AG04450 (cell line): ENCODE measurements at regions of chr19 and their contacts with region 1.

Region 1: GRCh38 chr19:5790573-5791520 is at the start of gene DUS3L:
- DNase-seq: peak; percentile 96
- H3K4me3 ChIP-seq: peak within 1 kb of the TSS; percentile 99
- H3K27ac ChIP-seq: peak within 1 kb of the TSS; percentile 95
- H3K27me3 ChIP-seq: no peaks in the 10 kb centered on the region
- CTCF ChIP-seq: no peak
- polyA plus RNA-seq, gene DUS3L: 7.8 and 8.0 TPM in 2 replicates

Region 2: GRCh38 chr19:5749505-5749904 is 41.3 kb before region 1 on chr19:
- CTCF ChIA-PET with region 1: no interaction called
- POLR2A ChIA-PET with region 1: interaction called, 10 read pairs
- DNase-seq: no peak
- H3K4me3 ChIP-seq: no peak overlapping the region
- H3K27ac ChIP-seq: no peak overlapping the region
- H3K27me3 ChIP-seq: peaks cover 2% of the 10 kb centered on the region
- CTCF ChIP-seq: no peak